IMR-90 (cell line): ENCODE measurements at regions of chr9 and their contacts with region 1.

Region 1: DNA sequence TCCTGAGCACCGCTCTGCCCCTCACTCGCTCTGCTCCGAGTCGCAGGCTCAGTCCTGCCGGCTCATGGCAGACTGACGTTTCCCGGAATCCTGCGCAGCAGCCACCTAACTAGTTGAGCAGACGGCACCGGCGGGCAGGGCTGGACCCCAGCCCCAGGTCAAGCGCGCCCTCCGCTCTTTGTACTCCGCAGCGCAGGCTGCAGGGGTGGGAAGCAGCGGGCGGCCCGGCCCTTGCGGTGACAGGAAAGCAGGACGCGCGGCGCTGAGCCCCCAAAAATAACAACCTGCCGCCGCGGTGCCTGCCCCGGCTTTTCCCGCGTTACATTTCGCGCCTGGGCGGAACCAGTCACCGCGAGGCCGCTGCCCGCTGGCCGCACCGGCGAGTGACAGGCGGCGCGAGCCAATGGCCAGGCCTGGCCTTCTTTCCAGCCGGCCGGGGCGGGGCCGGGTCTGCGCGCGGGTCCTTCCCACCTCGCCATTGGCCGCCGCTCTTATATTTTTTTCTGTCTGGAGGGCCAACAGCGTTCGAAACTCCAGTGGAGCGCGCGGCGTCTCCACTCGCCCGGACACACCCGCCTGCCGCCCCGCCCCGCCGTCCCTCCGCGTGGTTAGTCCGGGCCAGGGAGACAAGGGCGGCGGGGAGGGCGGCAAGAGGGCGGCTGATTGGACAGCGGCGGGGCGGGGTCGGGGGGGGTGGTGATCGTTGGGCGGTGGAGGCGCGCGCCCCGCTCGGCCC is at the start of gene ZNF367:
- DNase-seq: peak; percentile 95
- ATAC-seq: peak; percentile 86
- H3K4me3 ChIP-seq: peak within 1 kb of the TSS; percentile 85
- H3K27ac ChIP-seq: peak within 1 kb of the TSS; percentile 83
- H3K4me1 ChIP-seq: peaks cover 7% of the 10 kb centered on the region
- H3K27me3 ChIP-seq: no peaks in the 10 kb centered on the region
- CTCF ChIP-seq: no peak
- POLR2A ChIP-seq: no peak
- RAD21 ChIP-seq: no peak
- total RNA-seq, gene ZNF367: 2.7 and 4.7 TPM in 2 replicates

Region 2: DNA sequence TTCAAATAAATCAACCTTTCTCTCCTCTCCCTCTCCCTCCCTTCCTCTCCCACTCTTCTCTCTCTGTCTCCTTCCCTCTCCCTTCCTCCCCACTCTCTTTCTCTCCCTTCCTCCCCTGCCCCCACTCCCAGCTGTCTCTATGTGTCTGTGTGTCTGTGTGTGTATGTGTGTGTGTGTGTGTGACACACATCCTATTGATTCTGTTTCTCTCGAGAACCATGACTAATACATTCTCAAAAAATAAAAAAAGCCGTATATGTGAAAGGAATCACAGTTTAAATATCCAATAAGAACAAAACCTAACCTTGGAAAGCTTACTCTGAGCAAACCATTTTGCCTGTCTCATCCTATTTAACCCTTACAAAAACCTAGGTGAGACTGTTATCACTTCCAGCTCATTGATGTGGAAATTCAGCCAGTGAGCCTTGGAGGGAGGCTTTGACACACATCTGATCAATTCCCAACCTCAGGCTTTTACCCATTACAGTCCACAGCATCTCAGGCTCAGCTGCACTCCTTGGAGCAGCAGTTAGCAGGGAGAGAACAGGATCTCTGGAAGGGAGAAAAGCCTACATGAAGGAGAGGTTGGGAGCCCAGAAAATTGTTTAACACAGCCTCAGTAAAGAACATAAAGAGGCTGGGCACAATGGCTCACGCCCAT is 124.6 kb before region 1 on chr9:
- CTCF ChIA-PET with region 1: no interaction called
- POLR2A ChIA-PET with region 1: no interaction called
- dilution Hi-C with region 1: no loop called
- in situ Hi-C with region 1: no loop called
- intact Hi-C with region 1: no loop called
- DNase-seq: peak; percentile 72
- ATAC-seq: peak; percentile 64
- H3K4me3 ChIP-seq: no peak overlapping the region
- H3K27ac ChIP-seq: no peak overlapping the region
- H3K4me1 ChIP-seq: peaks cover 2% of the 10 kb centered on the region; the same call in 1 of the 2 replicates
- H3K27me3 ChIP-seq: no peaks in the 10 kb centered on the region
- CTCF ChIP-seq: no peak
- POLR2A ChIP-seq: no peak
- RAD21 ChIP-seq: no peak

Region 3: GRCh38 chr9:96327694-96328352 is 90.4 kb before region 1 on chr9:
- CTCF ChIA-PET with region 1: no interaction called
- POLR2A ChIA-PET with region 1: no interaction called
- dilution Hi-C with region 1: no loop called
- in situ Hi-C with region 1: no loop called
- intact Hi-C with region 1: loop called (anchors 5 kb)
- DNase-seq: peak; percentile 59
- ATAC-seq: peak; percentile 100
- H3K4me3 ChIP-seq: no peak overlapping the region
- H3K27ac ChIP-seq: no peak overlapping the region
- H3K4me1 ChIP-seq: no peaks in the 10 kb centered on the region
- H3K27me3 ChIP-seq: no peaks in the 10 kb centered on the region
- CTCF ChIP-seq: peak; percentile 88
- POLR2A ChIP-seq: no peak
- RAD21 ChIP-seq: peak; percentile 82

Region 4: GRCh38 chr9:96383165-96383942 is 34.9 kb before region 1 on chr9 and contains the start of gene SLC35D2:
- CTCF ChIA-PET with region 1: no interaction called
- POLR2A ChIA-PET with region 1: no interaction called
- dilution Hi-C with region 1: no loop called
- in situ Hi-C with region 1: no loop called
- intact Hi-C with region 1: loop called (anchors 5 kb)
- DNase-seq: peak; percentile 32
- ATAC-seq: peak; percentile 95
- H3K4me3 ChIP-seq: peak within 1 kb of the TSS; percentile 91
- H3K27ac ChIP-seq: peak within 1 kb of the TSS; percentile 46; the same call in 1 of the 2 replicates
- H3K4me1 ChIP-seq: peaks cover 7% of the 10 kb centered on the region
- H3K27me3 ChIP-seq: no peaks in the 10 kb centered on the region
- CTCF ChIP-seq: no peak
- POLR2A ChIP-seq: no peak
- RAD21 ChIP-seq: no peak
- total RNA-seq, gene SLC35D2: 9.7 and 11.4 TPM in 2 replicates

Region 5: GRCh38 chr9:96460882-96461281 is 42.6 kb after region 1 on chr9:
- CTCF ChIA-PET with region 1: no interaction called
- POLR2A ChIA-PET with region 1: no interaction called
- dilution Hi-C with region 1: no loop called
- in situ Hi-C with region 1: no loop called
- intact Hi-C with region 1: loop called (anchors 5 kb)
- DNase-seq: peak; percentile 43
- ATAC-seq: no peak
- H3K4me3 ChIP-seq: no peak overlapping the region
- H3K27ac ChIP-seq: no peak overlapping the region
- H3K4me1 ChIP-seq: peaks cover 8% of the 10 kb centered on the region
- H3K27me3 ChIP-seq: no peaks in the 10 kb centered on the region
- CTCF ChIP-seq: no peak
- POLR2A ChIP-seq: no peak
- RAD21 ChIP-seq: no peak

Region 6: DNA sequence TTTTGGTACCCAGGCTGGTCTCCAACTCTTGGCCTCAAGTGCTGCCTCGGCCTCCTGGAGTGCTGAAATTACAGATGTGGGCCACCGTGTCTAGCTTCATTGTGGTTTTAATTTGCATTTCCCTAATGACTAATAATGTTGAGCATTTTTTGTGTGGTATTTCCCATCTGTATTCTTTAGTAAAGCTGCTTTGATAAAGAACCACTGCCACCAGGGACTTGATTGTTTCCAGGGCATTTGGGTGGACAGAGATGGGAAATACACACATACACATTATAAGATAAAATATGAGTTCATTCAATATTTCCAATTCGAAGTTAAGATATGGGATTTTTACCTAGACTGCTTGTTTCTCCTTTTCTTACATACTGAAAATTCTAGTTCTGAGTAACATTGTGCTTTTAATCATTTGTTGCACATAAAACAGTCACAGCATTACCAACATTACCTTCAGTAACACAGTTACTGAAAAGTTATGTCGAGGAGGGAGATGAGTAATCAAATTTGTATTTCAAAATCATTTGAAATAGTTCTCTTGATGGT is 60.7 kb after region 1 on chr9:
- CTCF ChIA-PET with region 1: no interaction called
- POLR2A ChIA-PET with region 1: no interaction called
- dilution Hi-C with region 1: no loop called
- in situ Hi-C with region 1: no loop called
- intact Hi-C with region 1: no loop called
- DNase-seq: peak; percentile 49
- ATAC-seq: peak; percentile 40
- H3K4me3 ChIP-seq: no peak overlapping the region
- H3K27ac ChIP-seq: no peak overlapping the region; the same call in 1 of the 2 replicates
- H3K4me1 ChIP-seq: peaks cover 3% of the 10 kb centered on the region
- H3K27me3 ChIP-seq: no peaks in the 10 kb centered on the region
- CTCF ChIP-seq: no peak
- POLR2A ChIP-seq: no peak
- RAD21 ChIP-seq: no peak

Region 7: DNA sequence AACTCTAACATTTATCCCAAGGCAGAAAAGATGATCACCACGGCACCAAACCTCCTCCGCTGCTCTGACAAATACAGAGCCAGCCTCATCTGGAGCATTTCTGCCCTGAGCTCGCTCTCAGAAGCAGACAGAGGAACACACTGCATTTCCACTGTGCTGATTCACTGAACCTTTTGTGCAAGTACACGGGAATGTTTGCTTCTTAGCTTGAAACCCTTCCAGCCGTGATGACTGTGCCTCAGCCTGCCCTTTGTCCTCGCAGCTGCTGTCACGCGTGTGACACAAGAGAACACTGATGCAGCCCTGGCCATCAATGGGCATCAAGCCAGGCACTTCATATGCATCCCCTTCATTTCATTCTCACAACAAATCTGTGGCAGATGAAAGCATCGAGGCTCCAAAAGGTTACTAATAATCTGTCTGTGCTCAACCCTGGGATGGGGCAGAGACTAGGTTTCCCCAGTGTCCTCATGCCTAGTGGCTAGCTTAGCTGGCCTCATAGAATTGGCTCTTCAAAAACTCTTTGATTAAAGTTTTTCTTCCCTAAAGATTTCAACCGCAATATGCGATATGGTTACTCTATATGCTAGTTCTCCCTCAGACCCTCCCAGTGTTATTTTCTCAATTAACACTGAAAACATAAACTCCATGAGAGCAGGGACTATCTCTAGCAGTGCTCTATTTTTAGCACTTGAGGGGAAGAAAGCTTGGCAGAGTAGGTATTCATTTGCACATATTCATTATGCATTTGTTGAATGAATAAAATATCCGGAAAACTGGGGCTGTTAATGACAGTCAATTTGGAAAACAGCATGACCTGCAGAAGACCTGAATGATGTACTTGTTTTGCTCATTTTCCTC is 194.1 kb after region 1 on chr9:
- CTCF ChIA-PET with region 1: no interaction called
- POLR2A ChIA-PET with region 1: no interaction called
- dilution Hi-C with region 1: no loop called
- in situ Hi-C with region 1: no loop called
- intact Hi-C with region 1: loop called (anchors 2 kb)
- DNase-seq: peak; percentile 96
- ATAC-seq: peak; percentile 93
- H3K4me3 ChIP-seq: peak overlapping the region; percentile 0; the same call in 1 of the 2 replicates
- H3K27ac ChIP-seq: peak overlapping the region; percentile 4; the same call in 1 of the 2 replicates
- H3K4me1 ChIP-seq: peaks cover 8% of the 10 kb centered on the region
- H3K27me3 ChIP-seq: no peaks in the 10 kb centered on the region
- CTCF ChIP-seq: no peak
- POLR2A ChIP-seq: peak; percentile 68; the same call in 1 of the 2 replicates
- RAD21 ChIP-seq: 0 out of 2 replicates have a peak, but pooled peaks have one; percentile 23

Region 8: DNA sequence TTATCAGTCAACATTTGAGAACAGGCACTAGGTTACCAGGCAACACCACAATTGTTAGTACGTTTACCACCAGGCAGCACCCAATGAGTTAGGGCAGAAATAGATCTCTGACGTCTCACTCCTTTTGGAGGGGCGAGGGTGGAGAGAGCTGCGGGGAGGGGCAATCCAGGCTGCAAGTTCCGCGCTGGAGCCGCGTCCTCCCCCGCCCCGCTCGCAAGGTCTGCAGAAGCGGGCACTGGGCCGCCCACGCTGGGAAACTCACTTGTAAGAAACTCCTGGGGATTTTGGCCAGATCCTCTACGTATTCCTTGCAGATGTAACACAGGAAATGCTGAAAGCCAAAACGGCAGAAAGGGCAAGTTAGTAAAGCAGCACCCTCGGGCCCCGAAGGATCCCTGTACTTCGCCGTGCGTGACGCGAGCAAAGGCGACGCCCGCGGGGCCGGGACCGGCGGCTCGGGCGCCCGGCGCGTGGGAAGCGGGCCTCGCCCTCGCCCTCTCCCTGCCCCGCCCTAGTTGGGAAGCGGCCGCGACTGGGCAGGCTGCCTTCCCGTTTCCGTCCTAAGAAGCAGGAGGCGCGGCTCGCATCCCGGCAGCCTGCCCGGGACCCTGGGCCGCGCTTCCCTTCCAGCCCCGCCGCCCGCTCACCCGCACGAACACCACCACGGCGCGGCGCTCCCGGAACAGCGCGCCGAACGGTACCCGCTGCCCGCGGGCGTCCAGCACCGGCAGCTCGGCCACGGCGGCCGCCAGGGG is 236.4 kb after region 1 on chr9:
- CTCF ChIA-PET with region 1: no interaction called
- POLR2A ChIA-PET with region 1: interaction called, 5 read pairs
- dilution Hi-C with region 1: no loop called
- in situ Hi-C with region 1: loop called (anchors 10 kb)
- intact Hi-C with region 1: loop called (anchors 1 kb)
- DNase-seq: peak; percentile 86
- ATAC-seq: peak; percentile 80
- H3K4me3 ChIP-seq: peak overlapping the region; percentile 61
- H3K27ac ChIP-seq: peak overlapping the region; percentile 45
- H3K4me1 ChIP-seq: no peaks in the 10 kb centered on the region
- H3K27me3 ChIP-seq: no peaks in the 10 kb centered on the region; the same call in 1 of the 2 replicates
- CTCF ChIP-seq: peak; percentile 24; the same call in 1 of the 2 replicates
- POLR2A ChIP-seq: peak; percentile 12
- RAD21 ChIP-seq: no peak